CD4-positive, alpha-beta memory T cell (primary cell): ENCODE measurements at regions of chr16 and their contacts with region 1.

Region 1: DNA sequence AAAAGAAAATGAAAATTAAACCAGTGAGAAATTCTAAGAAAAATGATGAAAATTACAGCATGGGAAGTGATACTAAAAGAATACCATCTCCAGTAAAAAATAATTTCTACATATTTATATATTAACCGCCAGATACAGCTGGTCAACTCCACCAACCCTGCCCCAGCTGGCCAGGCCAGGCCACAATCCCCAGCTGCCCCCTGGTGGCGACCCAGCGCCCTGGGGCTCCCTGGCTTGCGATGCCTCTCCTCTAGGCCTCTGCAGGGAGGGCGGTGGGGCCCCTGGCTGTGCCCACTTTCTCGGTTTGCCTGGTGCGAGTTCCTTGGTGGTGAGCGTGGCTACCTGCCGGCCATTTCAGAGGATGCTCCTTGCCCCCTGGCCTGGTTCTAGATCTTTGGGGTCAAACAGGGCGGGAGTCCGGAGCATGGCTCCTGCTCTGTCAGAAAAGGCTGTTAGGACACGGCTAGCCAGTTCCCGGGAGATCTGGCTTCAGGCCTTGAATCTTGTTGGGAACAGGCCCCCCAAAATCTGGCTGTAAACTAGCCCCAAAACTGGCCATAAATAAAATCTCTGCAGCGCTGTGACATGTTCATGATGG is 14.5 kb downstream of the GLIS2 start:
- DNase-seq: peak; percentile 59 to 71 (median 61)
- H3K4me3 ChIP-seq: no peak overlapping the region
- H3K4me3 Mint-ChIP-seq: no peak overlapping the region
- H3K27ac ChIP-seq: no peak overlapping the region
- H3K27ac Mint-ChIP-seq: peak overlapping the region in 1 of 7 donors; percentile 50
- H3K4me1 ChIP-seq: peaks cover 9% of the 10 kb centered on the region
- H3K4me1 Mint-ChIP-seq: peaks cover 0 to 5% (median 1%) of the 10 kb centered on the region in 4 donors
- H3K27me3 ChIP-seq: no peaks in the 10 kb centered on the region
- H3K27me3 Mint-ChIP-seq: no peaks in the 10 kb centered on the region

Region 2: DNA sequence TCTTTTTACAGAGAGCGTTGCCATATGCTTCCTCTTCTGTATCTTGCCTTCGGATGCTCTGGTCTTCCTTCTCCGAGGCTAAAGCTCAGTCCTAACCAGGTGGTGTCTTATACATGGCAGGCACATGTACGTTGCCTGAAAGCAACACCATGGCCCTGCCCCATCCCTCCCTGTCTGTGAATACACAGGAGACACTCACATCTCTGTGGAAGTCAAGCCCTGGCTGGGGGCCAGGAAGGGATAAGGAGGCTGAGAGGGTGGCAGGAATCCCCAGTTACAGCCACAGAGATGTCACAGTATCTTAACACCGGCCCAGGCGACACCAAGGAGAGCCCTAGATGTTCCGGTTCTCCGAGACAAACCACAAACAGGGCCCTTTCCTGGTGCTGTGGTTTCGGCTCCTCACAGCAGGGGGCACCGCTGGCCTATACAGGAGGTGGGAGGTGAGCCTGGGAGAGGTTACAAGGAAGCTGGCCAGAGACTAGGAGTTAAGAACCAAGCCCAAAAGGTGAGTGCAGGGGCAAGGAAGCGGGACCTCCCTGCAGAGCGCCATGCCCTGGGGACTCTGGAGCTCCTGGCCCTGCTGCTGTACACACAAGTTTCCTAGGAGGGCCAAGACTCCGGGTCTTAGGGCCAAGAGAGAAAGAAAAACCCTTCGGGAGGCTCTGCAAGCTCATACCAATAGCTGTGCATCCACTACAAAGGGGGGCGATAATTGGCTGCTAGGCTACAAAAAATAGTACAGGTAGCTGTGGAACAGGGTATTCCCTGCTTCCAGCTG is 130.2 kb before region 1 on chr16:
- CTCF ChIA-PET with region 1: interaction called, 3 read pairs
- POLR2A ChIA-PET with region 1: no interaction called
- intact Hi-C with region 1: loop called (anchors 1 kb)
- DNase-seq: peak in 1 of 5 donors; percentile 22
- H3K4me3 ChIP-seq: no peak overlapping the region
- H3K4me3 Mint-ChIP-seq: peak overlapping the region in 3 of 8 donors; percentile 22 to 52 (median 43)
- H3K27ac ChIP-seq: no peak overlapping the region
- H3K27ac Mint-ChIP-seq: no peak overlapping the region
- H3K4me1 ChIP-seq: no peaks in the 10 kb centered on the region
- H3K4me1 Mint-ChIP-seq: peaks cover 0 to 6% (median 0%) of the 10 kb centered on the region in 4 donors
- H3K27me3 ChIP-seq: no peaks in the 10 kb centered on the region
- H3K27me3 Mint-ChIP-seq: peaks cover 3% of the 10 kb centered on the region in 2 donors

Region 3: GRCh38 chr16:5789033-5789746 is 1458.8 kb after region 1 on chr16:
- CTCF ChIA-PET with region 1: no interaction called
- POLR2A ChIA-PET with region 1: no interaction called
- intact Hi-C with region 1: no loop called
- DNase-seq: no peak
- H3K4me3 ChIP-seq: no peak overlapping the region
- H3K4me3 Mint-ChIP-seq: no peak overlapping the region
- H3K27ac ChIP-seq: no peak overlapping the region
- H3K27ac Mint-ChIP-seq: no peak overlapping the region
- H3K4me1 ChIP-seq: no peaks in the 10 kb centered on the region
- H3K4me1 Mint-ChIP-seq: no peaks in the 10 kb centered on the region
- H3K27me3 ChIP-seq: no peaks in the 10 kb centered on the region
- H3K27me3 Mint-ChIP-seq: peaks cover 0 to 3% of the 10 kb centered on the region in 2 donors